ENCODE measurements at regions of chr10 and their contacts with region 1.

Region 1: DNA sequence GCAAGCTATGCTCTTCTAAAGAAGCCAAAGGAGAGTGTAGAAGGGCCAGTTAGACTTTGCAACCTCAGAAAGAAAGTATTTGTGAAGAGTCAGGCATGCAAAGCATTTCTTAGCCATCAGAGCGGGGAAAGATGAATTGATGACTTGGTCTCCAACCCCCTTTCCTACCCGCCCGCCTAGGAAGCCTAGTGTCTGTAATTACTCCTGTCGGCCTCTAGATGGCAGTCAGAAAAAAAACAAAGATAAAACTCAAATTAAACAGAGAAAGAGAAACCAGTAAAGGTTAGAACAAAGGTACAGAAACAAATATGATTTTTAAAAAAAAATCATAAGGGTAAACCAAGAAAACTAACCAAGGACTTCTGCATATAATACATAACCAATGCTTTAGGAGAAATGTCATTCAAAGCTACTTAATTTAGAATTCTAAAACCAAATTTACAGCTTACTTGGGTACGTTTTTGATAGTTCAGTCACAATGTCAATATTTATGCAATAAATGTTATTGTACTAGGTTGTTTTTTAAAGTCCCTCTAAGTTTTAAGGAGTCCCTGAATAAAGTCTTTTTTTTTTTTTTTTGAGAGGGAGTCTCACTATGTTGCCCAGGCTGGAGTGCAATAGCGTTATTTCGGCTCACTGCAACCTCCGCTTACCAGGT is 97.6 kb downstream of the LYZL1 start:
- DNase-seq: no peak
- H3K4me3 ChIP-seq: no peak overlapping the region
- H3K27ac ChIP-seq: no peak overlapping the region
- H3K4me1 ChIP-seq: peaks cover 0 to 12% (median 0%) of the 10 kb centered on the region in 6 donors
- H3K27me3 ChIP-seq: no peaks in the 10 kb centered on the region
- CTCF ChIP-seq: peak; percentile 48 to 82 (median 73)
- POLR2A ChIP-seq: no peak

Region 2: GRCh38 chr10:29229258-29229705 is 157.2 kb before region 1 on chr10:
- intact Hi-C with region 1: no loop called
- DNase-seq: no peak
- H3K4me3 ChIP-seq: no peak overlapping the region
- H3K27ac ChIP-seq: no peak overlapping the region
- H3K4me1 ChIP-seq: no peaks in the 10 kb centered on the region
- H3K27me3 ChIP-seq: peaks cover 0 to 4% (median 0%) of the 10 kb centered on the region in 7 donors
- CTCF ChIP-seq: no peak
- POLR2A ChIP-seq: no peak

Region 3: DNA sequence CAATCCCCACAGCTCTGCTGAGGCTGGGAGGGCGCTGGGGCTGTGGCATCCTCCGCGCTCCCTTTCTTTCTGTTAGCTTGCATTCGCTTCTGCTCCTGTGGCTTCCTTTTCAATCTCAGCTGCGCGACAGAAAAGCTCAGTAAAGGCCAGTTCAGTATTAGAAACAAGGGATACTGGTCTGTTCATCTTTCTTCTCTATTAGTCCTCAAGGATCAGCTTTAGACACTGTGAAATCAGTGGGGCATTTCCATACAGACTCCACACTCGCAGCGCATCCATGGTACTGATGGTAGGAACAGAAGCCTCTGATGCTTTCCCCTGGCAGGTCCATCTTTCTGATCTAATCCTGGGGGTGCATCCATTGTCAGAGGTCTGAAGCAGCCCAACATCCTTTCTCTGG is 66.1 kb after region 1 on chr10:
- intact Hi-C with region 1: loop called (anchors 5 kb)
- DNase-seq: no peak
- H3K4me3 ChIP-seq: no peak overlapping the region
- H3K27ac ChIP-seq: no peak overlapping the region
- H3K4me1 ChIP-seq: peaks cover 0 to 12% (median 5%) of the 10 kb centered on the region in 6 donors
- H3K27me3 ChIP-seq: no peaks in the 10 kb centered on the region
- CTCF ChIP-seq: no peak
- POLR2A ChIP-seq: no peak

Region 4: GRCh38 chr10:29496341-29497162 is 110.1 kb after region 1 on chr10:
- intact Hi-C with region 1: loop called (anchors 5 kb)
- DNase-seq: peak; percentile 90
- H3K4me3 ChIP-seq: no peak overlapping the region
- H3K27ac ChIP-seq: no peak overlapping the region
- H3K4me1 ChIP-seq: no peaks in the 10 kb centered on the region
- H3K27me3 ChIP-seq: peaks cover 0 to 12% (median 0%) of the 10 kb centered on the region in 7 donors
- CTCF ChIP-seq: peak; percentile 38 to 90 (median 76)
- POLR2A ChIP-seq: no peak

Region 5: DNA sequence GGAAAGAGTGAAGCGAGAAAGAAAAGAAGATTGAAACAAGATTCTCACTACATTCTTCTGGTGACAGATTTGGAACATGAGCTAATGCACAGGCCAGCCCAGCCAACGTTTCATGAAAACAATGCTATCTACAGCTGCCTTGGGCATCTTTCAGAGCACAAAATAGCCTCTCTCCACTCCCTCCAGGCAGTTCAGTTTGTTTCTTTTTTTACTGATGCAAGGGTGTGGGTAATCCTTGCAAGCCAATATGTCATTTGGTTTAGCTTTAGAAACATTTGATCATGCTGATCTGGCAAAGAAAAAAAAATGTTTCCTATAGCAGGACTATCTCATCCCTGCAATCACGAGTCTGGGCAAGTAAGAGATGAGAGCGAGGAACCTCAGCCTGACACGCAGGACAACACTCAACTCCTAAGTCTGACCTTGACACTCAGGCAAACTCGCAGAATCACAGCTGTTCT is 212.4 kb after region 1 on chr10:
- intact Hi-C with region 1: no loop called
- DNase-seq: no peak
- H3K4me3 ChIP-seq: no peak overlapping the region
- H3K27ac ChIP-seq: no peak overlapping the region
- H3K4me1 ChIP-seq: peaks cover 0 to 10% (median 0%) of the 10 kb centered on the region in 6 donors
- H3K27me3 ChIP-seq: no peaks in the 10 kb centered on the region
- CTCF ChIP-seq: no peak
- POLR2A ChIP-seq: no peak

Region 6: DNA sequence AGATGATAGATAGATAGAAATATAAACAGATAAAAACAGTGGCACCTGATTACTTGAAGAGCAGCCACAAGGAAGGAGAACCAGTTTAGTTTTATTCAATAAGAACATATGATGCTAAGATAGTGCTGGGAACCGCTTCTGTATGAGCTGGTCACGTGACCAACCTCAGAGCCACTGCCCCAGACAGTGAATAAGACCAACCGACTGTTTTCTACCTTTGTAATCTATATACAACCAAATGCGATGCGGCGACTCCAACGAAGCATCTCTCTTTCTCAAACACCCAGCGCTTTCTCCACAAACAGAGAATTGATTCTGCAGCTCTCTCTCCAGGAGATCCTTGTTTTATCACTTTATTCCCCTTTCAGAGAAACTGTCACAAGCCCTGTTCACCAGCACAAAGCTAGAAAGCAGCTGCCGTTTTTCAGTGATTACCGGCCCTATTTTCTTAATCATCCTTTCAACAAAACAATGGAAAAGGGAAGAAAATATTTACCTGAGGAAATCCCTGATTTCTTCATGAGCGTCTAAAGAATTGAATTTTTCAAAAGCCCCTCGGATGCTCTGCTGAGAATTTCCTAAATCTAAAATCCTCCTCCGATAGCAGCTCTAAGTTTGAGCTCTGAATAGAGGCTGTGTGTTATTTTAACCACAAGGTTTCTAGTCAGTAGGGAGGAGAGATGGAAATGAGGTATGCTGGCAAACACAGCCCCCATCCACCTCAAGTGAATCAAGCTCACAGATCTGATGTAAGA is 728.6 kb after region 1 on chr10:
- intact Hi-C with region 1: no loop called
- DNase-seq: no peak
- H3K4me3 ChIP-seq: no peak overlapping the region
- H3K27ac ChIP-seq: no peak overlapping the region
- H3K4me1 ChIP-seq: no peaks in the 10 kb centered on the region
- H3K27me3 ChIP-seq: peaks cover 0 to 23% (median 0%) of the 10 kb centered on the region in 7 donors
- CTCF ChIP-seq: no peak
- POLR2A ChIP-seq: no peak